GM13976 (cell line): ENCODE measurements at regions of chr9 and their contacts with region 1.

Region 1: DNA sequence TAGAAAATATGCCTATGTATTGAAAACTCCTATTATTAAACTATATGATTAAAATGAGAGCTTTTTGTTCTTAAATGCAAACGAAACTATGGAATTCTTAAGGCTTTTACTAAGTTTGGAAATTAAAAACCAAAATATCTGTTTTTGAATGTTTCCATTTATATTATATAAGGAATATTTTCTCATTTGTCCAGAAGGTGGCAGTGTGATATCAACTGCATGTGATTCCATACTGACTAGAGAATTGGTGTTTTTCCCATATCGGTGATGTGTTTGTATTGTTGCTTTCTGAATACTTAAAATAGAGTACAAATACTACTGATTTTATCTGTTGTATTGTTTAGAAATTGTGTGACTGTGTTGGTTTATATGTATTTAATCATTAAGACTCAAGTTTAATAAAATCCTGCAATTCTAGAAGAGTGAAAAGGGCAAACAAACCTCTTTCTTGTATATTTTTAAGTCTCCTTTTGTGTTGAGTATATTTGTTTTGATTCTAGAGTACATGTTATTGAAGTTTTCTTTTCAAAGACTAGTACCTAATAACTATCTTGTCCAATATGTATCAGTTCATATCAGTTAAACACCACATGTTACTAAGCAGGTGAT is 320.8 kb downstream of the CCDC171 start:
- DNase-seq: peak; percentile 20
- CTCF ChIP-seq: peak; percentile 48

Region 2: GRCh38 chr9:15813076-15813475 is 60.6 kb before region 1 on chr9:
- in situ Hi-C with region 1: no loop called
- DNase-seq: no peak
- CTCF ChIP-seq: no peak

Region 3: GRCh38 chr9:16133556-16134227 is 260.0 kb after region 1 on chr9:
- in situ Hi-C with region 1: loop called (anchors 10 kb)
- DNase-seq: peak; percentile 64
- CTCF ChIP-seq: peak; percentile 69